ENCODE measurements at regions of chrX and their contacts with region 1.

Region 1: GRCh38 chrX:19887911-19888879 is 795 bp upstream of the SH3KBP1 start:
- DNase-seq: peak; percentile 54 to 63 (median 58)
- H3K4me3 ChIP-seq: peak overlapping the region; percentile 23 to 51
- H3K4me3 Mint-ChIP-seq: peak overlapping the region; percentile 72 to 86 (median 80)
- H3K27ac ChIP-seq: peak overlapping the region; percentile 59
- H3K27ac Mint-ChIP-seq: peak overlapping the region; percentile 77 to 96 (median 89)
- H3K4me1 ChIP-seq: peaks cover 36% of the 10 kb centered on the region
- H3K4me1 Mint-ChIP-seq: peaks cover 24 to 50% (median 35%) of the 10 kb centered on the region in 4 donors
- H3K27me3 ChIP-seq: no peaks in the 10 kb centered on the region
- H3K27me3 Mint-ChIP-seq: no peaks in the 10 kb centered on the region

Region 2: GRCh38 chrX:19544693-19545305 is 343.4 kb before region 1 on chrX:
- CTCF ChIA-PET with region 1: interaction called, 3 read pairs
- POLR2A ChIA-PET with region 1: no interaction called
- intact Hi-C with region 1: loop called (anchors 1 kb)
- DNase-seq: peak in 4 of 5 donors; percentile 28 to 42 (median 39)
- H3K4me3 ChIP-seq: no peak overlapping the region
- H3K4me3 Mint-ChIP-seq: no peak overlapping the region
- H3K27ac ChIP-seq: no peak overlapping the region
- H3K27ac Mint-ChIP-seq: peak overlapping the region; percentile 24 to 91 (median 47)
- H3K4me1 ChIP-seq: no peaks in the 10 kb centered on the region
- H3K4me1 Mint-ChIP-seq: peaks cover 5 to 19% (median 12%) of the 10 kb centered on the region in 4 donors
- H3K27me3 ChIP-seq: no peaks in the 10 kb centered on the region
- H3K27me3 Mint-ChIP-seq: no peaks in the 10 kb centered on the region

Region 3: GRCh38 chrX:19593690-19594089 is 294.5 kb before region 1 on chrX:
- CTCF ChIA-PET with region 1: no interaction called
- POLR2A ChIA-PET with region 1: no interaction called
- intact Hi-C with region 1: loop called (anchors 1 kb)
- DNase-seq: peak in 4 of 5 donors; percentile 22 to 36 (median 34)
- H3K4me3 ChIP-seq: no peak overlapping the region
- H3K4me3 Mint-ChIP-seq: no peak overlapping the region
- H3K27ac ChIP-seq: no peak overlapping the region
- H3K27ac Mint-ChIP-seq: peak overlapping the region in 5 of 7 donors; percentile 3 to 39 (median 31)
- H3K4me1 ChIP-seq: no peaks in the 10 kb centered on the region
- H3K4me1 Mint-ChIP-seq: peaks cover 6 to 20% (median 17%) of the 10 kb centered on the region in 4 donors
- H3K27me3 ChIP-seq: no peaks in the 10 kb centered on the region
- H3K27me3 Mint-ChIP-seq: no peaks in the 10 kb centered on the region

Region 4: DNA sequence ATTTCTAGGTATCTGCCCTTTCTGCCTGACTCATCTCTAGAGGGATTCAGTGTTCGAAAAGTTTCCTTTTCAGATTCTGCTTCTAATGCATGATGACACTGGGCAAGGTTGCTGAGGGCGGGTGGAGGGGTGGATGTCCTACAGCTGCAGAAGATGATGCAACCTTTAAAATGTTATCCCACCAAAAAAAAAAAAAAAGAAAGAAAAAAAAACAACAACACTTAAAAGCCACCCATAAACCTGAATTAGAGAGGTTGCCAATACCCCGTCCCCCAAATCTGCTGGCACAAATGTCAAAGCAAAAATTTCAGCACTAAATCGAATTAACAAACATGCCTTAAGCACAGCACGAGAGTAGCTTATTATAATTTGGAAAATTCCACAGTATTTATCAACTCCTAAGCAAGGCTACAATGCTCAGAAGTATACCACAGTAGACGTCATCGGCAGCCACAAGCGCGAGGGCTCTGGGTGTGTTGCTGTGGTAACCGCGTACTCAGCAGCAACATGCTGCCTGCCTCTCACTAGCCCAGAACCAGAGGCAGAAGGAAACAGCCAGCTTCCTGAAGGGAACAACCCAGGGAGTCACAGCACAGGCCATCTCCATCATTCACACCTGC is 205.4 kb before region 1 on chrX:
- CTCF ChIA-PET with region 1: no interaction called
- POLR2A ChIA-PET with region 1: no interaction called
- intact Hi-C with region 1: loop called (anchors 2 kb)
- DNase-seq: peak; percentile 83 to 92 (median 85)
- H3K4me3 ChIP-seq: no peak overlapping the region
- H3K4me3 Mint-ChIP-seq: peak overlapping the region; percentile 12 to 75 (median 59)
- H3K27ac ChIP-seq: peak overlapping the region; percentile 92
- H3K27ac Mint-ChIP-seq: peak overlapping the region; percentile 95 to 100 (median 98)
- H3K4me1 ChIP-seq: peaks cover 89% of the 10 kb centered on the region
- H3K4me1 Mint-ChIP-seq: peaks cover 55 to 84% (median 72%) of the 10 kb centered on the region in 4 donors
- H3K27me3 ChIP-seq: no peaks in the 10 kb centered on the region
- H3K27me3 Mint-ChIP-seq: no peaks in the 10 kb centered on the region

Region 5: DNA sequence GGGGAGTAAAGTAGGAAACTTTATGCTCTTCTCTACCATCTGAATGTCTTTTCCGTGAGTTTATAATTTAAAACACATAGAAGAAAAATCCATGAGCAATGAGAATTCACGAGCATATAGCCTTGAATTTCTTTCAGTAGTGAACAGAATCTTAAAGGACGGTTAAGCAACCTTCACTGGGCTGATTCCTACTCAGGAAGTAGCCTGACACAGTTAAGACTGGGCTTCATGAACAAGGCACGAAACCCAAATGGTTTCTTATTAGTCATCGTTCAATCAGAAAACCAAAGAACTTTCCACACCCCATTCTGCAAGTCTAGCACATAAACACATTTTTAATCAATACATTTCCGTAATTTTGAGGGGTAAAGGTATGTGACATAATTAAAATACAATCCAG is 96.6 kb before region 1 on chrX:
- CTCF ChIA-PET with region 1: interaction called, 13 read pairs
- POLR2A ChIA-PET with region 1: interaction called, 4 read pairs
- intact Hi-C with region 1: no loop called
- DNase-seq: peak in 2 of 5 donors; percentile 30 to 68
- H3K4me3 ChIP-seq: no peak overlapping the region
- H3K4me3 Mint-ChIP-seq: peak overlapping the region; percentile 33 to 89 (median 70)
- H3K27ac ChIP-seq: no peak overlapping the region
- H3K27ac Mint-ChIP-seq: peak overlapping the region; percentile 7 to 90 (median 73)
- H3K4me1 ChIP-seq: peaks cover 90% of the 10 kb centered on the region
- H3K4me1 Mint-ChIP-seq: peaks cover 45 to 81% (median 68%) of the 10 kb centered on the region in 4 donors
- H3K27me3 ChIP-seq: no peaks in the 10 kb centered on the region
- H3K27me3 Mint-ChIP-seq: no peaks in the 10 kb centered on the region

Region 6: DNA sequence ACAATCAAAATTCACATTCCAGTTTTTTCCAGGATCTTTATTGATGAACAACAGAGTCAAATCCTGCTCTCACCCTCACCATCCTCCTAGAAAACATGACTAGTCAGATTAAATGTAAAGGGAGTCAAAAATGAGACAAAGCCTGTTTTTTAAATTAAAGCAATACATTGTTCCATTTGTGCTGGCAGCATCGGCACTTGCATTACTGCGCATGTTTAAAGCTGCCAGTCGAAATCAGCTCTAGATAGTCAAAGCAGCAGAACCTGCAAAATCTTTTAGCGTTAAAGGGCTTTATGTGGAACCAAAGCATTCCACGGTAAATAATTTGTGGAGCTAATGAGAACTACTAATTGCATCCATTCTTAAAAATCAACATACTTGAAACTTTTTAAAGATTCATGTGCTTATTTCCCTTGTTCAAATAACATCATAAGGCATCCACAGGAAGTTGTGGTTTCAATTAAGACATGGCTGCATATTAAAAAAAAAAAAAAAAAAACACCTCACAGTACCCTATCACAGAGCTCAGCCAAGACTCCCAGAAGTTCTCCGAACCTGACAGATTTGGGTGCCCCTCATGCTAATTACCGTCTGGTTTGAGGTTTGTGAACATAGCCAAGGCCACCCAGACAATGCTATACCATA is 83.0 kb before region 1 on chrX:
- CTCF ChIA-PET with region 1: interaction called, 3 read pairs
- POLR2A ChIA-PET with region 1: interaction called, 9 read pairs
- intact Hi-C with region 1: loop called (anchors 2 kb)
- DNase-seq: peak in 4 of 5 donors; percentile 50 to 60 (median 54)
- H3K4me3 ChIP-seq: peak overlapping the region in 1 of 2 donors; percentile 24
- H3K4me3 Mint-ChIP-seq: peak overlapping the region; percentile 59 to 85 (median 72)
- H3K27ac ChIP-seq: peak overlapping the region; percentile 41
- H3K27ac Mint-ChIP-seq: peak overlapping the region; percentile 85 to 93 (median 92)
- H3K4me1 ChIP-seq: peaks cover 71% of the 10 kb centered on the region
- H3K4me1 Mint-ChIP-seq: peaks cover 30 to 65% (median 49%) of the 10 kb centered on the region in 4 donors
- H3K27me3 ChIP-seq: no peaks in the 10 kb centered on the region
- H3K27me3 Mint-ChIP-seq: no peaks in the 10 kb centered on the region

Region 7: GRCh38 chrX:21457718-21458117 is 1569.5 kb after region 1 on chrX:
- CTCF ChIA-PET with region 1: no interaction called
- POLR2A ChIA-PET with region 1: no interaction called
- intact Hi-C with region 1: no loop called
- DNase-seq: no peak
- H3K4me3 ChIP-seq: no peak overlapping the region
- H3K4me3 Mint-ChIP-seq: no peak overlapping the region
- H3K27ac ChIP-seq: no peak overlapping the region
- H3K27ac Mint-ChIP-seq: no peak overlapping the region
- H3K4me1 ChIP-seq: no peaks in the 10 kb centered on the region
- H3K4me1 Mint-ChIP-seq: no peaks in the 10 kb centered on the region
- H3K27me3 ChIP-seq: no peaks in the 10 kb centered on the region
- H3K27me3 Mint-ChIP-seq: no peaks in the 10 kb centered on the region